Spleen (tissue), 13 donors: ENCODE measurements at regions of chr12 and their contacts with region 1.

Region 1: DNA sequence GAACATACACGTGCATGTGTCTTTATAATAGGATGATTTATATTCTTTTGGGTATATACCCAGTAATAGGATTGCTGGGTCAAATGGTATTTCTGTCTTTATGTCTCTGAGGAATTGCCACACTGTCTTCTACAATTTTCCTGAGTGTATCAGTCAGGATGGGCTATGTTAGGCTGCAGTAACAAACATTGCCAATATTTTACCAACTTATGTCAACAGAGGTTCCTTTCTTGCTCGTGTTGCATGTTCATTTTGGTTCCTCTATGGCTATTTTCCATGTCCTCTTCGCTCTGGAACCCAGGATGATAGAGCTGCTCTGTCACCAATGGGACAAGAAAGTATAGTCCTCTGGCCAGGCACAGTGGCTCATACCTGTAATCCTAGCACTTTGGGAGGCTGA is 86.7 kb downstream of the ZNF664 start:
- DNase-seq: no peak
- H3K4me3 ChIP-seq: no peak overlapping the region
- H3K27ac ChIP-seq: no peak overlapping the region
- H3K4me1 ChIP-seq: no peaks in the 10 kb centered on the region
- H3K27me3 ChIP-seq: peaks cover 0 to 9% (median 0%) of the 10 kb centered on the region in 7 donors
- CTCF ChIP-seq: no peak
- POLR2A ChIP-seq: no peak

Region 2: GRCh38 chr12:124294780-124295241 is 235.1 kb after region 1 on chr12 and contains the start of gene RFLNA:
- intact Hi-C with region 1: loop called (anchors 10 kb)
- DNase-seq: no peak
- H3K4me3 ChIP-seq: peak within 1 kb of the TSS in 1 of 8 donors; percentile 44
- H3K27ac ChIP-seq: no peak within 1 kb of the TSS
- H3K4me1 ChIP-seq: peaks cover 0 to 21% (median 13%) of the 10 kb centered on the region in 6 donors
- H3K27me3 ChIP-seq: peaks cover 0 to 70% (median 38%) of the 10 kb centered on the region in 7 donors
- CTCF ChIP-seq: no peak
- POLR2A ChIP-seq: no peak
- total RNA-seq, gene RFLNA: 0.13 TPM in 1 of 7 donors, not detected in the others